Right lobe of liver (tissue), 6 donors: ENCODE measurements at regions of chr7 and their contacts with region 1.

Region 1: GRCh38 chr7:17523813-17524741 is 225.6 kb downstream of the AHR start:
- DNase-seq: peak; percentile 76 to 89 (median 87)
- ATAC-seq: peak; percentile 90 to 96 (median 91)
- H3K4me3 ChIP-seq: peak overlapping the region in 1 of 3 donors; percentile 1
- H3K27ac ChIP-seq: peak overlapping the region; percentile 63 to 81 (median 81)
- H3K4me1 ChIP-seq: peaks cover 0 to 13% (median 3%) of the 10 kb centered on the region in 4 donors
- H3K27me3 ChIP-seq: no peaks in the 10 kb centered on the region
- CTCF ChIP-seq: no peak
- POLR2A ChIP-seq: no peak

Region 2: GRCh38 chr7:16918288-16918895 is 605.7 kb before region 1 on chr7:
- intact Hi-C with region 1: no loop called
- DNase-seq: no peak
- ATAC-seq: peak in 1 of 4 donors; percentile 24
- H3K4me3 ChIP-seq: no peak overlapping the region
- H3K27ac ChIP-seq: no peak overlapping the region
- H3K4me1 ChIP-seq: peaks cover 0 to 7% (median 0%) of the 10 kb centered on the region in 4 donors
- H3K27me3 ChIP-seq: no peaks in the 10 kb centered on the region
- CTCF ChIP-seq: peak; percentile 69 to 77 (median 75)
- POLR2A ChIP-seq: no peak

Region 3: DNA sequence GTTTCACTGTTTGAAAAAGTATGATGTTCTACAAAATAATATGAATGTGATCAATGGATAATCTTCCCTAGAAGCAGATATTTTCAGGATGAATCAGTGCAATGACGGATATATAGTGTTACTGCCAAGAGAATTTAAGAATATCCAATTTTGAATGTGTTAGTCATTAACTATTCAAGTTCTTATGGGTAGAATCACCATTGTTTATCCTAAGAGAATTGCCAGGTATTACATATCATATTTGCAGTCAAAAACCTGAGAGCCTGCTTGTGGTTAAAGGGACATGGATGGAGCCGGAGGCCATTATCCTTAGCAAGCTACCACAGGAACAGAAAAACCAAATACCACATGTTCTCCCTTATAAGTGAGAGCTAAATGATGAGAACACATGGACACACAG is 198.7 kb before region 1 on chr7:
- intact Hi-C with region 1: loop called in 1 of 2 experiments (anchors 10 kb)
- DNase-seq: no peak
- ATAC-seq: peak in 2 of 4 donors; percentile 32 to 64
- H3K4me3 ChIP-seq: no peak overlapping the region
- H3K27ac ChIP-seq: no peak overlapping the region
- H3K4me1 ChIP-seq: peaks cover 0 to 25% (median 9%) of the 10 kb centered on the region in 4 donors
- H3K27me3 ChIP-seq: no peaks in the 10 kb centered on the region
- CTCF ChIP-seq: no peak
- POLR2A ChIP-seq: no peak

Region 4: DNA sequence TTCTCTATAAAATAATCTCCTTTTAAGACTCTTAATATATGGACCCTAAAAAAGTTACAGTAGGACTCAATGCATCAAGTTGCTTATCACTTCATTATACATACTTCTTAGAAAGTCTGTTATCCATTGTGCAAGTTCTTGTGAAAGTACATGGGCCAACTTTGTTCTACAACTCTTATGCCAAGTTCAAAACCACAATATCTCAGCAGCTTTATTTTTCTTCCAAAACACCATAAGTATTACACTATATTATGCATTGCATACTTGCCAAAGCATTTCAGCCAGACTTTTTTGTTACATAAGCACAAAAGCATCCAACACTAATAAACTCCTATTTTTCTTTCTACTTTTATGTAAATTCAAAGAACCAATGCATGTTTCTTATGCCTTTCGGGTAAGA is 131.2 kb before region 1 on chr7:
- intact Hi-C with region 1: no loop called
- DNase-seq: no peak
- ATAC-seq: no peak
- H3K4me3 ChIP-seq: no peak overlapping the region
- H3K27ac ChIP-seq: no peak overlapping the region
- H3K4me1 ChIP-seq: no peaks in the 10 kb centered on the region
- H3K27me3 ChIP-seq: no peaks in the 10 kb centered on the region
- CTCF ChIP-seq: no peak
- POLR2A ChIP-seq: no peak

Region 5: GRCh38 chr7:17599733-17600685 is 75.9 kb after region 1 on chr7:
- intact Hi-C with region 1: no loop called
- DNase-seq: no peak
- ATAC-seq: peak in 2 of 4 donors; percentile 54 to 60
- H3K4me3 ChIP-seq: no peak overlapping the region
- H3K27ac ChIP-seq: no peak overlapping the region
- H3K4me1 ChIP-seq: no peaks in the 10 kb centered on the region
- H3K27me3 ChIP-seq: no peaks in the 10 kb centered on the region
- CTCF ChIP-seq: no peak
- POLR2A ChIP-seq: no peak